Ascending aorta (tissue), 2 donors: ENCODE measurements at regions of chr6 and their contacts with region 1.

Region 1: DNA sequence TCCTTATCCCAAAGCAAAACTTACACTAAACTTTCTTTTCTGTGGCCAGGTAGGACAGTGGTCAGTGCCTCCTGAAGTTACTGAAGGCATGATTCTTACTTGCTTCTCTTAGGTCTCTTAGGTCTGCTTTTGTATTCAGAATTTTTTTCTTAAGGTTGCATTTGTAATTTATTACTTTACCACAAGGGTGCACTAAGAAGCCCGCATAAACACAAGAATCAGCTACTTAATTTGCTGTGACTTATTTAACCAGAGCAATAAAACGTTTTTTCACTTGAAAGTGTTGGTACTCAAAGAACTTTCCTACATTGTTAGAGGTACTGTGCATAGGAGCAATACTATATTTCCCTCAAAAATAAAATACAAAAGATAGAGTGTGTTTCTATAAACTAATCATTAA is 75.4 kb upstream of the LAMA2 start:
- DNase-seq: no peak
- H3K4me3 ChIP-seq: no peak overlapping the region
- H3K27ac ChIP-seq: no peak overlapping the region
- H3K4me1 ChIP-seq: no peaks in the 10 kb centered on the region
- H3K27me3 ChIP-seq: no peaks in the 10 kb centered on the region
- CTCF ChIP-seq: peak in 2 of 3 experiments; percentile 10 to 41

Region 2: DNA sequence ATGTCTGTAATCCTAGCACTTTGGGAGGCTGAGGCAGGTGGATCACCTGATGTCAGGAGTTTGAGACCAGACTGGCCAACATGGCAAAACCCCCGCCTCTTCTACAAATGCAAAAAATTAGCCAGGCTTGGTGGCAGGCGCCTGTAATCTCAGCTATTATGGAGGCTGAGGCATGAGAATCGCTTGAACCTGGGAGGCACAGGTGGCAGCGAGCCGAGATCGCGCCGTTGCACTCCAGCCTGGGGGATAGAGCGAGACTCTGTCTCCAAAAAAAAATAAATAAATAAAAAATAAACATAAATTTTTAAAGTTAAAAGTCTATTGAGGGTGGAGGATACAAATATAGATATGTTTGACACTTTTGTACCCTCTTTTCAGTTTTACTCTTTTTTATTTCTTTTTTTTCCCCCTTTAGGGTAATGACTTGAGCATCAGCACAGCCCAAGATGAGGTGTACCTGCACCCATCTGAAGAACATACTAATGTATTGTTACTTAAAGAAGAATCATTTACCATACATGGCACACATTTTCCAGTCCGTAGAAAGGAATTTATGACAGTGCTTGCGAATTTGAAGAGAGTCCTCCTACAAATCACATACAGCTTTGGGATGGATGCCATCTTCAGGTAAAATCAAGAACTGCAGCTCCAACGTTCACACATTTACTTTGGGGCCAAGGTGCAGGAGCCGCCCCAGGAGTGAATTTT is 444.2 kb after region 1 on chr6:
- intact Hi-C with region 1: loop called (anchors 5 kb)
- DNase-seq: peak in 1 of 2 donors; percentile 64
- H3K4me3 ChIP-seq: no peak overlapping the region
- H3K27ac ChIP-seq: no peak overlapping the region
- H3K4me1 ChIP-seq: no peaks in the 10 kb centered on the region
- H3K27me3 ChIP-seq: no peaks in the 10 kb centered on the region
- CTCF ChIP-seq: peak; percentile 20 to 75 (median 58)